Caco-2 (cell line): ENCODE measurements at regions of chr5 and their contacts with region 1.

Region 1: GRCh38 chr5:65481635-65482295 is at the start of gene ADAMTS6:
- DNase-seq: peak; percentile 49 to 64
- H3K4me3 ChIP-seq: peak within 1 kb of the TSS; percentile 35
- H3K4me3 Mint-ChIP-seq: no peak within 1 kb of the TSS
- H3K27ac Mint-ChIP-seq: no peak within 1 kb of the TSS
- H3K4me1 ChIP-seq: peaks cover 5% of the 10 kb centered on the region
- H3K4me1 Mint-ChIP-seq: no peaks in the 10 kb centered on the region
- H3K27me3 ChIP-seq: no peaks in the 10 kb centered on the region
- H3K27me3 Mint-ChIP-seq: no peaks in the 10 kb centered on the region
- CTCF ChIP-seq: no peak
- total RNA-seq, gene ADAMTS6: 0.23 and 0.67 TPM in 2 replicates

Region 2: GRCh38 chr5:64811050-64811640 is 670.6 kb before region 1 on chr5:
- CTCF ChIA-PET with region 1: interaction called, 17 read pairs
- POLR2A ChIA-PET with region 1: no interaction called
- intact Hi-C with region 1: loop called (anchors 1 kb)
- DNase-seq: peak in 1 of 2 experiments; percentile 32
- H3K4me3 ChIP-seq: no peak overlapping the region
- H3K4me3 Mint-ChIP-seq: no peak overlapping the region
- H3K27ac Mint-ChIP-seq: no peak overlapping the region
- H3K4me1 ChIP-seq: no peaks in the 10 kb centered on the region
- H3K4me1 Mint-ChIP-seq: no peaks in the 10 kb centered on the region
- H3K27me3 ChIP-seq: no peaks in the 10 kb centered on the region
- H3K27me3 Mint-ChIP-seq: no peaks in the 10 kb centered on the region
- CTCF ChIP-seq: peak; percentile 58 to 68

Region 3: DNA sequence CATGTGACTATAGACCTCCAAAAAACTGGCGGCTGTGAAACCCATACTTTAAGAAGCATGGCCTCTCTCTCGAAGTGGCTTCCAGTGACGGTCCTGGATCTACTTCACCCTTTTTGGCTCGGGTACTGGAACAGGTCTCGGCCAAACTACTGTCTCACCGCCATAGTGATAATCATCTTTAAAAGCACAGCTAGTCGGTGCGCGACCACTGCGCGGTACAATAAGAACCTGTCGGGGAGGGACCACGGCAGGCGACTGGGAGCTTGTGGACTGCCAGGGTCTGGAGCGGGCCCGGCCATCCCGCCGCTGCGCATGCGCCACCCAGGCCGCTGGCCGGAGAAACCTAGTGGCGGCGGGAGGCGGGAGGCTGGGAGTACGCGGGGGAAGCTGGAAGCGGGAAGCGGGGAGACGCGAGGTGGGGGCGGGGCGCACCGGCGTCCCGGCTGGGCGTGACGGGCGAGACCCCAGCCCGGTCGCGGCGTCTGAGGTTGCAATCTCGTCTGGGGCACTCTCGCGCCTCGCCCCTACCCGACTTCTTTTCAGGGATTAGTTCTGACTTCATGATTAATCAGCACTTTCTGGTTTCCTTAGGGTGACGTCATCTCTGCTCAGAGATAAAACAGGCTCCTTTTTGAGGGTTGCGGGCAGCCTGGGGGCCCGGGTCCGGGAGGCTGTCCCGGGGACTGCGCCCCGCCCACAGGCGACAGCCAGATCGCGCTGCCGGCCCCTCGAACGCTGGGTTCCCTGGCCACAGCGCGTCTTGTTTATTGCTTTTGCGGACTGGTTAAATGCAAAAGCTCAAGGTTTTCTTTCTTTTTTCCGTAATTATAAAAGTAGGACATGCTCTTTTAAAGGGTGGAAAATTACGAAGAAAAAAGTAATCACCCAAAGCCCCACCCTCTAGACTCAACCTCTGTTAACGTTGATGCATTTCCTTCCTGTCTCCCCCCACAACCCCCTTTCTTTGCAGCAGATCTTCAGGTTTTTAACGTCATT is 446.3 kb before region 1 on chr5:
- CTCF ChIA-PET with region 1: no interaction called
- POLR2A ChIA-PET with region 1: no interaction called
- intact Hi-C with region 1: loop called (anchors 10 kb)
- DNase-seq: peak; percentile 92 to 96
- H3K4me3 ChIP-seq: peak overlapping the region; percentile 63
- H3K4me3 Mint-ChIP-seq: peak overlapping the region; percentile 79
- H3K27ac Mint-ChIP-seq: peak overlapping the region; percentile 84
- H3K4me1 ChIP-seq: peaks cover 7% of the 10 kb centered on the region; the same call in 1 of the 2 replicates
- H3K4me1 Mint-ChIP-seq: peaks cover 6% of the 10 kb centered on the region
- H3K27me3 ChIP-seq: no peaks in the 10 kb centered on the region
- H3K27me3 Mint-ChIP-seq: no peaks in the 10 kb centered on the region
- CTCF ChIP-seq: no peak

Region 4: DNA sequence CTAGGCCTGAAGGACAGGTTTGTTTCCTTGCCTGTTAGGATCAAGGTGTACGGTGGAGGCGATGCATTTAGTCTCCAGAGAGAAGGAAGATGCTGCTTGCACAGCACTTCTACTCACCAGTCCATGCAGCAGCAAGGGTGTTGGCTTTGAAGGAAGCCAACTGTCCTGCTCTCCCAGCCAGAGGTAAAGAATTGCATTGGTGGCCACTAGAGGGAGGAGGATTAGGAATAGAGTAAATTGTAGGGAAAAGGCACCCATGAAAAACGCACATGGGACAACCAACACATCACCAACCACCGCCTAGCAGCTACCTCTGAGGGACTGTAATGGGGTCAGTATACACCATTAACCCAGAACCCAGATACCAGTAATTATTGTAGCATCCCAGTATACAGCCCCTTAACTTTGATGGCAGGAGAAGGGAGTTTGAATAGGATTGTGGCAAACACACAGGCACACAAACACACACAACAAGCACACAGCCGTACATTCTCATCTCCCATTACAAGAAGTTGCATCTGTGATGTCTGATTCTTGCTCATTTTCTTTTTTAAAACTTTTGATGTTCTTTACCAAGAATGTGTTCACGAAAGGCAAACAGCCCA is 267.7 kb before region 1 on chr5:
- CTCF ChIA-PET with region 1: interaction called, 3 read pairs
- POLR2A ChIA-PET with region 1: no interaction called
- intact Hi-C with region 1: loop called (anchors 1 kb)
- DNase-seq: peak; percentile 56 to 61
- H3K4me3 ChIP-seq: no peak overlapping the region
- H3K4me3 Mint-ChIP-seq: no peak overlapping the region
- H3K27ac Mint-ChIP-seq: no peak overlapping the region
- H3K4me1 ChIP-seq: no peaks in the 10 kb centered on the region
- H3K4me1 Mint-ChIP-seq: no peaks in the 10 kb centered on the region
- H3K27me3 ChIP-seq: no peaks in the 10 kb centered on the region
- H3K27me3 Mint-ChIP-seq: peaks cover 3% of the 10 kb centered on the region
- CTCF ChIP-seq: peak; percentile 62 to 69

Region 5: DNA sequence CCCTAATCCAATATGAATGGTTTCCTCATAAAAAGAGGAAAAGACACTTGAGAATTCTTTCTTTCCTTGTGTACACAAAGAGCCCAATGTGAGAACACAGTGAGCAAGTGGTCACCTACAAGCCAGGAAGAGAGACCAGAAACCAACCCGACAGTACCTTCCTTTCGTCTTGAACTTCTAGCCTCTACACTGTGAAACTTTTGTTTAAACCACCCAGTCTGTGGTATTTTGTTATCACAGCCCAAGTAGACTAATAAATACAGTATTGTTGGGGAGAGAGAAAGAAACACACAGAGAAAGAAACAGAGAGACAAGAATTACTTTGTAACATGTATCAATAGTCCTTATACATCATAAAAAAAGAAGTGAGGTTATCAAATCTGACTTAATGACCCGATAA is 44.0 kb after region 1 on chr5:
- CTCF ChIA-PET with region 1: no interaction called
- POLR2A ChIA-PET with region 1: no interaction called
- intact Hi-C with region 1: no loop called
- DNase-seq: no peak
- H3K4me3 ChIP-seq: no peak overlapping the region
- H3K4me3 Mint-ChIP-seq: no peak overlapping the region
- H3K27ac Mint-ChIP-seq: no peak overlapping the region
- H3K4me1 ChIP-seq: no peaks in the 10 kb centered on the region
- H3K4me1 Mint-ChIP-seq: no peaks in the 10 kb centered on the region
- H3K27me3 ChIP-seq: no peaks in the 10 kb centered on the region
- H3K27me3 Mint-ChIP-seq: no peaks in the 10 kb centered on the region
- CTCF ChIP-seq: no peak